ENCODE measurements at regions of chr16 and their contacts with region 1.

Region 1: DNA sequence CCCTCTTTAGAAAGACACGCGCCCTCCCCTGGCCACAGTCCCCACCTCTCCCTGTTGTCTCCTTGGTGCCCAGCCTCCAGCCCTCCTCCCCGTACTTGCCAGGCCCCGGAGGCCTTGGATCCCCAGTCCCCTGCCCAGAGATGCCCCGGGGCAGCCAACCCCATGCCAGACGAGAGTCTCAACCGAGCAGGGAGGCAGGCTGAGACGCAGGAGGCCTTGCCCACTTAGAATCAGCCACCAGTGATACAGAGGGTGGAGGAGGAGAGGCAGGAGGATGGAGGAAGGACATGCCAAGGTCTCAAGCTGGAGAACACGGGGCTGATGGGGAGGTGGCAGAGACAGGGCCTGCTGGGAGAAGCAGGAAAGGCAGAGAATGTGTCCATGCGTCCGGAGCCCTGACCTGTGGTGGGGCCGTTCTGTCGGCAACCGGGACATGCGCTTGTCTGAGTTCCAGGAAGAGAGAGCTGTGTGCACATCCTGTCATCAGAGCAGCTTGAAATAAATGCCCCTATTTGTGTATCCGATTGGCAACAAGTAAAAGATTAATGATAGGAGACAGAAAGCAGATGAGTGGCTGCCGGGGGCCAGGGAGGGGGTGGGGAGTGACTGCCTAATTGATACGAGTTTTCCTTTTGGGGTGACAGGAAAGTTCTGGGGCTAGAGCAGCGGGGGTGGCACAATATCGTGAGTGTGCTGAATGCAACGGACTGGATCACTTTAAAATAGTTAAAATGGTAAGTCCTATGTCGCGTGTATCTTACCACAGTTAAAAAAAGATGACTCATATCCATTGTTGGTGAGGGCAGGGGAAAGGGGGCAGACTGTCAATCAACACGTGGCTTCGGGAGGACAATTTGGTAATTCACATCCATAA is 44.7 kb upstream of the MEAK7 start:
- DNase-seq: peak in 8 of 9 donors; percentile 42 to 64 (median 60)
- ATAC-seq: peak; percentile 69
- H3K4me3 ChIP-seq: peak overlapping the region; percentile 65
- H3K4me3 Mint-ChIP-seq: peak overlapping the region; percentile 81 to 95 (median 90)
- H3K27ac ChIP-seq: peak overlapping the region; percentile 75
- H3K27ac Mint-ChIP-seq: peak overlapping the region; percentile 91 to 100 (median 96)
- H3K4me1 ChIP-seq: peaks cover 41 to 45% of the 10 kb centered on the region in 2 donors
- H3K4me1 Mint-ChIP-seq: peaks cover 38 to 70% (median 67%) of the 10 kb centered on the region in 7 donors
- H3K27me3 ChIP-seq: no peaks in the 10 kb centered on the region
- H3K27me3 Mint-ChIP-seq: no peaks in the 10 kb centered on the region

Region 2: DNA sequence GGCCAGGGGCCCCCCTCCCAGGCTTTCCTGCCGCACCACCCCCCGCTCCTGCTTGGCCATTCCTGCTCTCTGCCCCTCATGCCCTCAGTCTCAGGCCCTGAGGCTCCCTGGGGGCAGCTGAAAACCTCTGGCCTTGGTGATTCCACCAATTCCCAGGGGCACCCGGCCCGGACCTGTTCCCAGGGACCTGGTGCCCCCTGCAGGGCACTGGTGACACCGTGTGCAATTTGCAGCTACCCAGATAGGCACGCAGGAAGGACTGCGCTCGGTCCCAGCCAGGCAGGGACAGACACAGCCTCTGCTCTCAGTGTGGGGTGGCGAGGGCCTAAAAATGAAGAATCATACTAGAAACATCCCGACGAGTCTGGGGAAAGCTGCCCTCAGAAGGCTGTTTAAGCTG is 241.1 kb before region 1 on chr16:
- CTCF ChIA-PET with region 1: no interaction called
- POLR2A ChIA-PET with region 1: no interaction called
- intact Hi-C with region 1: no loop called
- DNase-seq: no peak
- ATAC-seq: peak; percentile 38
- H3K4me3 ChIP-seq: no peak overlapping the region
- H3K4me3 Mint-ChIP-seq: no peak overlapping the region
- H3K27ac ChIP-seq: no peak overlapping the region
- H3K27ac Mint-ChIP-seq: no peak overlapping the region
- H3K4me1 ChIP-seq: no peaks in the 10 kb centered on the region
- H3K4me1 Mint-ChIP-seq: peaks cover 0 to 5% (median 0%) of the 10 kb centered on the region in 7 donors
- H3K27me3 ChIP-seq: no peaks in the 10 kb centered on the region
- H3K27me3 Mint-ChIP-seq: peaks cover 12 to 30% (median 29%) of the 10 kb centered on the region in 5 donors

Region 3: DNA sequence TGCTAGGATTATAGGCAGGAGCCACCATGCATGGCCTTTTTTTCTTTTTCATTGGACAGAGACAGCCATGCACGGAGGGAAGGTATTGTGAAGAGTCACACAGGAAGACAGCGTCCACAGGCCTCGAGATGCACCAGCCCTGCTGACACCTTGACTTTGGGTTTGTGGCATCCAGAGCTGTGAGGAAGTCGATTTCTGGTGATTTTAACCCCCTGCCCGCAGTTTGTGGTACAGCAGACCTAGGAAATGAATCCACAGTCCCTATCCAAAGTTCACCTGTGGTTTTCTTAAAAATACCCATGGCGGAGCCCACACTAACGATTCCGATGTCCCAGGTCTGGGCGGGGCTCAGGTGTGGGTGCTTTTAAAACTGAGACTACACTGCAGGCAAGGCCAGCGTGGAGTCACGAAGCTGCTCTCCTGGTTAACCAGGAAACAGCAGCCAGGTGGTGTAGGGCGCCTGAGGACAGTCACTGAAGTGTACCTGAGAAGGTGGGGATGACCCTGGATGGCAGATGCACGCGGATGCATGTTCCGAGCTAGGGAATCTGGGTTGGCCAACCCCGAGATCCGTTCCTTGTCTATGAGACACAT is 30.4 kb before region 1 on chr16:
- CTCF ChIA-PET with region 1: interaction called, 8 read pairs
- POLR2A ChIA-PET with region 1: interaction called, 29 read pairs
- intact Hi-C with region 1: loop called (anchors 1 kb)
- DNase-seq: peak in 8 of 9 donors; percentile 55 to 73 (median 67)
- ATAC-seq: peak; percentile 64
- H3K4me3 ChIP-seq: peak overlapping the region; percentile 1
- H3K4me3 Mint-ChIP-seq: peak overlapping the region; percentile 32 to 72 (median 54)
- H3K27ac ChIP-seq: peak overlapping the region; percentile 56
- H3K27ac Mint-ChIP-seq: peak overlapping the region; percentile 72 to 91 (median 85)
- H3K4me1 ChIP-seq: peaks cover 48 to 66% of the 10 kb centered on the region in 2 donors
- H3K4me1 Mint-ChIP-seq: peaks cover 38 to 74% (median 62%) of the 10 kb centered on the region in 7 donors
- H3K27me3 ChIP-seq: no peaks in the 10 kb centered on the region
- H3K27me3 Mint-ChIP-seq: no peaks in the 10 kb centered on the region

Region 4: GRCh38 chr16:84599521-84600202 is 50.5 kb after region 1 on chr16:
- CTCF ChIA-PET with region 1: interaction called, 10 read pairs
- POLR2A ChIA-PET with region 1: interaction called, 16 read pairs
- intact Hi-C with region 1: loop called (anchors 1 kb)
- DNase-seq: peak in 6 of 9 donors; percentile 41 to 78 (median 50)
- ATAC-seq: peak; percentile 39
- H3K4me3 ChIP-seq: peak overlapping the region; percentile 44
- H3K4me3 Mint-ChIP-seq: peak overlapping the region; percentile 78 to 94 (median 87)
- H3K27ac ChIP-seq: peak overlapping the region; percentile 87
- H3K27ac Mint-ChIP-seq: peak overlapping the region; percentile 90 to 98 (median 97)
- H3K4me1 ChIP-seq: peaks cover 82 to 90% of the 10 kb centered on the region in 2 donors
- H3K4me1 Mint-ChIP-seq: peaks cover 73 to 94% (median 88%) of the 10 kb centered on the region in 7 donors
- H3K27me3 ChIP-seq: no peaks in the 10 kb centered on the region
- H3K27me3 Mint-ChIP-seq: peaks cover 0 to 4% (median 0%) of the 10 kb centered on the region in 5 donors

Region 5: DNA sequence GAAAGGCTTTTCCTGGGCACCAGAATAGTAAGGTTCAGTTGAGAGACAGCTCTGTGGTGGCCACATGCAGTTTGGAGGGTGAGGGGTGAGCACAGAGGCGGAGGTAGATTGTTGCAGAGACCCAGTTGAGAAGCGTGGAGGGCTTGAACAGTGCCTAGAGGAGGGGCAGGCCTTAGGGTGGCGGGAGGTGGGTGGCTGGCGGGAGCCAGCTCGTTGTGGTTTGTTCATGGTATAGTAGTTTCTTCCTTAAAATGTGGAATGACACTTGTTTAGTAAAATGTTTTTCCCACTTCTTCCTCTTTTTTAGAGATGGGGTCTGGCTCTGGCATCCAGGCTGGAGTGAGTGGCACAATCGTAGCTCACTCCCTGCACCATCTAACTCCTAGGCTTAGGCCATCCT is 164.8 kb after region 1 on chr16:
- CTCF ChIA-PET with region 1: no interaction called
- POLR2A ChIA-PET with region 1: no interaction called
- intact Hi-C with region 1: no loop called
- DNase-seq: no peak
- ATAC-seq: peak; percentile 44
- H3K4me3 ChIP-seq: no peak overlapping the region
- H3K4me3 Mint-ChIP-seq: peak overlapping the region in 2 of 10 donors; percentile 1 to 12
- H3K27ac ChIP-seq: no peak overlapping the region
- H3K27ac Mint-ChIP-seq: peak overlapping the region in 6 of 9 donors; percentile 6 to 82 (median 21)
- H3K4me1 ChIP-seq: peaks cover 9 to 26% of the 10 kb centered on the region in 2 donors
- H3K4me1 Mint-ChIP-seq: peaks cover 47 to 94% (median 83%) of the 10 kb centered on the region in 7 donors
- H3K27me3 ChIP-seq: no peaks in the 10 kb centered on the region
- H3K27me3 Mint-ChIP-seq: no peaks in the 10 kb centered on the region